Spleen (tissue), 13 donors: ENCODE measurements at regions of chr2 and their contacts with region 1.

Region 1: DNA sequence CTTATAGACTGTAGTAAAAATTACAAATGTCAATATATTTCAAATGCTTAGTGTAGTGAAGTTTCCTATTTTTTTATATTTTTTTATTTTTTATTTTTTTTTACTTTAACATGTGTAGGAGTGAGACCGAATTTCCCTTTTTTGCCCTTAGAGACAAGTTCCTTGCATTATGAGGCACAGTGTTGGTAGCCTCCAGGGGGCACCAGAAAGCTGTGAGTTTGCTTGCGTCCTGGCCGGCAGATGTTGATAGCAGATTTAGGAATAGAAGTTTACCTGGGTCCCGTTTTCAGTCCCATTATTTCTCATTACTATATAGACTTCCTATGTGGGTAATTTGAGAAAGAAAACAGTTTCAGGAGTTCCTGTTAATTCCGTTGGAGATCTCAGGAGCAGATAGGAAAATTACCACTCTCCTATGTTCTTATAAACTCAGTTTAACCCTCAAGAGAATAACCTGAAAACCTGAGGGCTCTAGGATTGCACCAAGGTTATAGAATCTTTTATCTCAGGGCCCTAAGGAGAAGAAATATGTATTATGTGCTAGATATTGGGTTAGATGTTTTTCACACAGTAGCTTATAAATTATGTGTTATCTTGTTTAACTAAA is 157.5 kb upstream of the SESTD1 start:
- DNase-seq: no peak
- H3K4me3 ChIP-seq: no peak overlapping the region
- H3K27ac ChIP-seq: no peak overlapping the region
- H3K4me1 ChIP-seq: no peaks in the 10 kb centered on the region
- H3K27me3 ChIP-seq: peaks cover 0 to 4% (median 0%) of the 10 kb centered on the region in 7 donors
- CTCF ChIP-seq: peak in 10 of 11 experiments; percentile 29 to 66 (median 55)
- POLR2A ChIP-seq: no peak

Region 2: DNA sequence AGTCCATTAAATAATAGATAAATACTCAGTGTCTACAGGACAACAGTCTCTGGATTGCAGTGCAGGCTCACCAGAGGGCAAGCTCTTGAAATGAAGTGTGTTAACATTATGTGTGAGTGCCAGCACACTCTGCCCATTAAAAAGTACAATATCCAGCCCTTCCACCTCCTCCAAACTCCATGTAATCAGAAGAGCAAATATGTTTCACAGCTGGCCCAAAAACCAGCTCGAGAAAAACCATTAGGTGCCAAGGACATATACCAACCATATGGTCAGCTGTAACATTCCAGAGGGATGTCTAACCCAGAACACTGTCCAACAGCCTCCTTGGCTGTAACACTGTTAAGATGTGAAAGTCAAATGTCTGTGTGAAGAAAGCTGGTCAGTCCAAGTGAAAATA is 327.1 kb after region 1 on chr2:
- intact Hi-C with region 1: loop called (anchors 10 kb)
- DNase-seq: no peak
- H3K4me3 ChIP-seq: no peak overlapping the region
- H3K27ac ChIP-seq: no peak overlapping the region
- H3K4me1 ChIP-seq: no peaks in the 10 kb centered on the region
- H3K27me3 ChIP-seq: no peaks in the 10 kb centered on the region
- CTCF ChIP-seq: no peak
- POLR2A ChIP-seq: no peak